ENCODE measurements at regions of chr21 and their contacts with region 1.

Region 1: DNA sequence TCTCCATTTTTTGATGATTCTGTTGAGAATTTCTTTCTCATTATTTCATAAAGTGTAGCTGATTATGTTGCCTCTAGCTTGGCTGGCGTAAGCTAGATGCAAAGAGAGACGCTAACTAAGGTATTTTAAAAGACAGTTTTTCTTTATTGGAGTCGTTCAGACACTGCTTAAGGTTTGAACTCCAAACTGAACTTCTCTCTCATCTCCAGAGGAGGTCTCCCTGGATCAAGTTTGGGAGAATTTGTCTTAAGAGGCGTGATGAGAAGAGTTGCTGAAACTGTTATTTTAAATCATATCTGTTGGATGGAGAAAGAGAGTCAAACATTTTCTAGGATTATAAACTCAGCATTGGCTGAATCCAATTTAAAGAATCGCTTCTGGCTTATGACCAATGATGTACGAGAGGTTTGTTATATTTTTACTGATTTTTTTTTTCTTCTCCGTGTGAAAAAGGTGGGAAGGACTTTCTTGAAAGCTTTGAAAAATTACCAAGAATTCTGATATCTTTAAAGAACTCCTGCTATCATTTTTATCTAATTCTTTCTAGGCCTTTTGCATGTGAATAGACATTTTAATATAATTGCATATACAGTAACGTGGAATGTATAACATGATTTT is 34.0 kb downstream of the MAP3K7CL start:
- DNase-seq: peak; percentile 74
- H3K4me3 ChIP-seq: no peak overlapping the region
- H3K27ac ChIP-seq: peak overlapping the region; percentile 24
- H3K4me1 ChIP-seq: peaks cover 9% of the 10 kb centered on the region
- H3K27me3 ChIP-seq: no peaks in the 10 kb centered on the region
- CTCF ChIP-seq: peak; percentile 48 to 64
- POLR2A ChIP-seq: no peak

Region 2: DNA sequence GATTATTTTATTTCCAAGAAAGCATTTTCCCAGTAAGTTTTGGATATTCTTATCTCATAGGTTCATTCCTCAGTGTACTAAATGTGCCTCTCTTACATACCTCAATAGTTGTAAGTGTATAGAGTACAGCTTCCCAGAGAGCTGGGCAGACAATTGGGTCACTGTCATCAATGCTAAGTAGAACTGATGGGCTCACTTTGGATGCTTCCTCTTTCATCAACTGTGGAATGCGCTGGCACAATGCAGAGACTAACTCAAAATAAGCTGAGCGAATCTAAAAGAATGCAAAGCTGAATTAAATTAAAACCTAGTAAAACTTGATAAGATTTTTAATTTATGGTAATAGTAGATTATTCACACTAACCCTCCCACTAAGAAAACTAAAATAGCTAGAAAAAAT is 193.3 kb before region 1 on chr21:
- CTCF ChIA-PET with region 1: no interaction called
- POLR2A ChIA-PET with region 1: no interaction called
- dilution Hi-C with region 1: no loop called
- intact Hi-C with region 1: no loop called
- DNase-seq: no peak
- H3K4me3 ChIP-seq: no peak overlapping the region
- H3K27ac ChIP-seq: no peak overlapping the region
- H3K4me1 ChIP-seq: no peaks in the 10 kb centered on the region
- H3K27me3 ChIP-seq: no peaks in the 10 kb centered on the region
- CTCF ChIP-seq: no peak
- POLR2A ChIP-seq: no peak

Region 3: DNA sequence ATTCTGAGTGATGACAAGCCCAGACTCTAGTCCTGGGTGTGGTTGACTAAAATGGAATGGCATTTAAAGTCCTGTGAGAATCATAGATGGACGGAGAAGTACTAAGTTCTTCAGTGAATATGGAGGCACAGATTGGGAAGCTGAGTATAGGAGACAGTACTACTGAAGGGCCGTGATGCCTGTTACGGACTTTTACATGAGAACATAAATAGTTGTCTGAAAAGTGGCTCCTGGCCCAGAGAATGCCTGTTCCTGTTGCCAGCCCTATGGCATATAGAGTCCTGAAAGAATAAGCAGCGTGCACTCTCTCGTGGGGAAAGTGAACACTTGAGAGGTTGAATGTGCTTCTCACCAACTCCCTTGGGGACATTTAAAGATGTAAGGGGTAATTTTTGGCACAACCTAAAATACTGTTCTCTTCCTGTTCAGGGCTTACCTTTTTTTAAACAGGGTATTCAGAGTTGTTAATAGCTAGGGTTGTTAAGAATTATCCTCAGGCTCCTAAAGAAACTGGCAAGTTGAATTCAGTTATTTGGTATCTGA is 111.4 kb before region 1 on chr21:
- CTCF ChIA-PET with region 1: no interaction called
- POLR2A ChIA-PET with region 1: no interaction called
- dilution Hi-C with region 1: no loop called
- intact Hi-C with region 1: no loop called
- DNase-seq: no peak
- H3K4me3 ChIP-seq: no peak overlapping the region
- H3K27ac ChIP-seq: no peak overlapping the region
- H3K4me1 ChIP-seq: no peaks in the 10 kb centered on the region
- H3K27me3 ChIP-seq: no peaks in the 10 kb centered on the region
- CTCF ChIP-seq: no peak
- POLR2A ChIP-seq: no peak

Region 4: GRCh38 chr21:29091032-29091431 is 73.4 kb before region 1 on chr21:
- CTCF ChIA-PET with region 1: interaction called, 51 read pairs
- POLR2A ChIA-PET with region 1: no interaction called
- dilution Hi-C with region 1: no loop called
- intact Hi-C with region 1: loop called (anchors 1 kb)
- DNase-seq: peak; percentile 63
- H3K4me3 ChIP-seq: no peak overlapping the region
- H3K27ac ChIP-seq: peak overlapping the region; percentile 65
- H3K4me1 ChIP-seq: peaks cover 22% of the 10 kb centered on the region
- H3K27me3 ChIP-seq: no peaks in the 10 kb centered on the region
- CTCF ChIP-seq: no peak
- POLR2A ChIP-seq: no peak

Region 5: GRCh38 chr21:29175408-29176134 is 11.1 kb after region 1 on chr21:
- CTCF ChIA-PET with region 1: interaction called, 23 read pairs
- POLR2A ChIA-PET with region 1: no interaction called
- dilution Hi-C with region 1: no loop called
- intact Hi-C with region 1: no loop called
- DNase-seq: peak; percentile 98
- H3K4me3 ChIP-seq: peak overlapping the region in 1 of 3 experiments; percentile 10
- H3K27ac ChIP-seq: peak overlapping the region; percentile 63
- H3K4me1 ChIP-seq: peaks cover 26% of the 10 kb centered on the region
- H3K27me3 ChIP-seq: no peaks in the 10 kb centered on the region
- CTCF ChIP-seq: no peak
- POLR2A ChIP-seq: no peak

Region 6: GRCh38 chr21:29187944-29188343 is 23.5 kb after region 1 on chr21:
- CTCF ChIA-PET with region 1: interaction called, 10 read pairs
- POLR2A ChIA-PET with region 1: no interaction called
- dilution Hi-C with region 1: no loop called
- intact Hi-C with region 1: no loop called
- DNase-seq: peak; percentile 96
- H3K4me3 ChIP-seq: no peak overlapping the region
- H3K27ac ChIP-seq: no peak overlapping the region
- H3K4me1 ChIP-seq: peaks cover 29% of the 10 kb centered on the region
- H3K27me3 ChIP-seq: no peaks in the 10 kb centered on the region
- CTCF ChIP-seq: no peak
- POLR2A ChIP-seq: no peak

Region 7: DNA sequence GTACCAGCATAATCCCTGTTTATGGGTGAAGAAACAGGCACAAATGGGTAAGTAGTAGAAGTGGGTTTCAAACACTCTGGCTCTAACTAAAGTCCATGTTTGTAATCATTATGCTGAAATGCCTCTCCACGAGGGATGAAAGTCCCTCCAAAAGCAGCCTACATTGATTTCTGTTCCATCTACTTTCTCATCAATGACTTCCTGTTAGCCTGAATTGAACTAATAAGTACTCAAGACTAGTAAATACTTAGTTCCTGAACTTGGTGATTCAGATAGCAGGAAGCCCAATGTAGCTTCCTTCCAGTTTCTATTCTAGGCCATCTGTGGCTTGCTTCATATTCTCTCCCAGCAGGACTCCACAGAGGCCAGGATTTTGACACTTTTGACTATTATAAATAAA is 122.9 kb after region 1 on chr21:
- CTCF ChIA-PET with region 1: interaction called, 16 read pairs
- POLR2A ChIA-PET with region 1: no interaction called
- dilution Hi-C with region 1: no loop called
- intact Hi-C with region 1: no loop called
- DNase-seq: peak; percentile 60
- H3K4me3 ChIP-seq: peak overlapping the region in 1 of 3 experiments; percentile 21
- H3K27ac ChIP-seq: no peak overlapping the region
- H3K4me1 ChIP-seq: peaks cover 32% of the 10 kb centered on the region
- H3K27me3 ChIP-seq: peaks cover 3 to 5% of the 10 kb centered on the region in 2 experiments
- CTCF ChIP-seq: no peak
- POLR2A ChIP-seq: no peak

Region 8: DNA sequence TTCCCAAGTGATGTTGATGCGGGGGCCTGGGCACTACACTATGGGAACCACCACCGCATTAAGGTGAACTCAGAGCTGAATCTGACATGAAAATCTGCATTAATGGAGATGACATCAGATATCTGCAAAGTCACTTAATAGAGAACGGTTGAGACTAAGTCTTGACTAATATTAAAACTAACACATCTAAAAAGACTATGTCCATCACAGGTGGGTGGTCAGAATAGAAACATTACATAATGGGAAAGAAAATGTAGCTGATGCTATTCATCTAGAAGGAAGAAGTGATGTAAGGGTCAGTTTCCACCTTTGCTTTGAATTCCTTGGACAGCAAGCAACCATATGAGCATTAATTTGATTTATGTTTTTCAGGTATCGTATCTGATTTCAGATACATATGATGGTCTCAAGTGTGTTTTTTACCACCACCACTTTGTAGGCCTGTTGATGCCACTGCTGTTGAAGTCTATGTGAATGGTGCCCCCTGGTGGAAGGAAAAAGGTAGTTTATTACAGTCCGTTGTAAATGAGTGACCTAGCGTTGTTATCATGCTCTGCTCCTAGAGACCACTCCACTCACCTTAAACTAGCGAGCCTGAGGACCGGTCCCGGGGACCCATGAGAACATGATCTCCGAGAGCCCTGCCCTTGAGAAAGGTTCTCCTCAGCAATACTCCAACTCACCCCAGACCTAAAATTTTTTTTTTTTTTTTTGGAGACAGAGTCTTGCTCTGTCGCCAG is 207.8 kb after region 1 on chr21:
- CTCF ChIA-PET with region 1: interaction called, 107 read pairs
- POLR2A ChIA-PET with region 1: no interaction called
- dilution Hi-C with region 1: no loop called
- intact Hi-C with region 1: loop called (anchors 1 kb)
- DNase-seq: peak; percentile 75
- H3K4me3 ChIP-seq: no peak overlapping the region
- H3K27ac ChIP-seq: no peak overlapping the region
- H3K4me1 ChIP-seq: peaks cover 4% of the 10 kb centered on the region
- H3K27me3 ChIP-seq: no peaks in the 10 kb centered on the region
- CTCF ChIP-seq: peak; percentile 57 to 61
- POLR2A ChIP-seq: no peak

Region 9: GRCh38 chr21:30620522-30620921 is 1456.1 kb after region 1 on chr21 and contains the start of gene KRTAP20-4:
- CTCF ChIA-PET with region 1: no interaction called
- POLR2A ChIA-PET with region 1: no interaction called
- dilution Hi-C with region 1: no loop called
- intact Hi-C with region 1: no loop called
- DNase-seq: no peak
- H3K4me3 ChIP-seq: no peak within 1 kb of the TSS
- H3K27ac ChIP-seq: no peak within 1 kb of the TSS
- H3K4me1 ChIP-seq: no peaks in the 10 kb centered on the region
- H3K27me3 ChIP-seq: no peaks in the 10 kb centered on the region
- CTCF ChIP-seq: no peak
- POLR2A ChIP-seq: no peak
- total RNA-seq, gene KRTAP20-4: not detected in 2 replicates